ENCODE measurements at regions of chr2 and their contacts with region 1.

Region 1: GRCh38 chr2:85266146-85267041 is 61.4 kb downstream of the TGOLN2 start:
- H3K4me3 ChIP-seq: no peak overlapping the region
- H3K27ac ChIP-seq: no peak overlapping the region
- H3K4me1 ChIP-seq: no peaks in the 10 kb centered on the region
- CTCF ChIP-seq: no peak

Region 2: DNA sequence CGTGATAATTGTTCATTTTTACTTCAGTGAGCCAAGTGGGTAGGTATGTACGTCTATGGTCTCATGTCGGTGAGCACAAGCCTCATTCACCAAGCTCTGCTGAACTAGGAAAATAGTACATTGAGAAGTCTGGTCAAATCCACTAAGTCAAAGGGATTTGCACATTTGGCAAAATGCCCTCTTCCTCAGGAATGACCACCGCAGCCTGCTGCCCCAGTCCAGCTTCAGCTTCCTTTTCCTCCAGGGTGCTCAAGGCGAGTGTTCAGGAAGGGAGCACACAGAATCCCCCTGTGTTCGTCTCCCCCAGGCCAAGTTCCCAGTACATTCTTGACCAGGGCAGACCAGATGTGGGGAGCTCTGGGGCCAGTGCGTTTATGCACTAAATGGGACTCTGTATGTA is 110.2 kb before region 1 on chr2:
- CTCF ChIA-PET with region 1: no interaction called
- POLR2A ChIA-PET with region 1: no interaction called
- H3K4me3 ChIP-seq: no peak overlapping the region
- H3K27ac ChIP-seq: no peak overlapping the region
- H3K4me1 ChIP-seq: peaks cover 18% of the 10 kb centered on the region
- CTCF ChIP-seq: no peak

Region 3: DNA sequence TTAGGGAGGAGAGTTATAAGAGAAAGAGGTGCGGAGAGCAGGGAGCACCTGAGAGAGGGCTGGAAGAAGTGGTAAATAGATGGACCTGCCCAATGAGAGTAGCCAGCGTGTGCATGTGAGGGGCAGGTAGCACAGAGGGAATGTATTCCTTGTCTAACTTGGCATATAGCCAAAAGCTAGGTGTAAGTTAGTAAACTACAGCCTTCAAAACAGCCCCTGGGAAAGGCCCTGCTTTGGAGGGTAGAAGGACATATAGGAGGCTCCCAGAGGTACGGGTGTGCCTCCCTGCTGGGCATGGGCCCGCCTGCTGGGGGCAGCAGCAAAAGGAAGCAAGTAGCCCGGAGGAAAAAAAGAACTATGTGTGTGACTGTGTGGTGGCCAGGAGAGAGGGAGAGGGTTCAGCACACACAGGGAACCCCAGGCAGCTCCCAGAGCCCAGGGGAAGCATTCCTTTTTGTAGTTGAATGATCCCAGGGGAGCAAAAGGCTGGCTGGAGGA is 85.2 kb before region 1 on chr2:
- CTCF ChIA-PET with region 1: interaction called, 14 read pairs
- POLR2A ChIA-PET with region 1: no interaction called
- H3K4me3 ChIP-seq: no peak overlapping the region
- H3K27ac ChIP-seq: no peak overlapping the region
- H3K4me1 ChIP-seq: peaks cover 4% of the 10 kb centered on the region; the same call in 1 of the 2 replicates
- CTCF ChIP-seq: no peak

Region 4: GRCh38 chr2:85243101-85244072 is 23.0 kb before region 1 on chr2:
- CTCF ChIA-PET with region 1: interaction called, 11 read pairs
- POLR2A ChIA-PET with region 1: no interaction called
- H3K4me3 ChIP-seq: no peak overlapping the region
- H3K27ac ChIP-seq: no peak overlapping the region
- H3K4me1 ChIP-seq: no peaks in the 10 kb centered on the region
- CTCF ChIP-seq: peak; percentile 37; the same call in 1 of the 2 replicates

Region 5: DNA sequence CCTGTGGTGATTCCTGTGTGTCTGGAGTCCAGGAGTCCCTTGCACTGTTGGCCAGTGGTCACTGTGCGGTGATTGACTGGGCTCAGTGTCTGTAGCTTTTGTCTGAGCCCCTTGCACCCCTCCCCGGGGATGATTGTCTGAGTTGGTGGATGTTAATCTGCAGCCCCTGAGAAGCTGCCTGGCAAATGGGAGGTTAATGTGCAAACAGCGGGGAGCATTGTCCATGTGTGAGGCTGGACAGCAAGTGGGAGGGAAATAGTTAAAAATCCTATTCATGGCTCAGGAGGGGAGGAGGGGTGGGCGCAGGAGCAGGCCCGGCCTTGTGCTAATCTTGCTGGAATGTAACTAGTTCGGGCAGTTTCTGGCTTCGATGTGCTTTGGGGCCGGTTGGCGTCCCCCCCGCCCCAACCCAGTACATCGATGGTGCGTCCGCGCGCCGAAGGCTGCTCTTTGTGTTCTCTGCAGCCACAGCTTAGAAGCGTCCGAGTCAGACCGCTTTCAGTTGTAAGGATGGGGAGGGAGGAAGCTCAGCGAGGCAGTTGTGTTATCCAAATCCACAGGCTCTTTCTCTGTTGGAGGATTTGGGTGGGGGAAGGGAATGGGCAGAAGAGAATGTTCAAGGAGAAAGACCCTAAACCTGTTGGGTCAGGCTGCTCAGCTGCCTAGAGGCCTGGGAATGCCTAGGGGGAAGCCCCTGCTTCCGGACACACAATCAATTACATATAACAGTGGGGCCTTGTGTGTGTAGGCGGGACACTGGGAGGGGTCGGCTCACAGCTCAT is 10.4 kb before region 1 on chr2:
- CTCF ChIA-PET with region 1: interaction called, 44 read pairs
- POLR2A ChIA-PET with region 1: no interaction called
- H3K4me3 ChIP-seq: no peak overlapping the region
- H3K27ac ChIP-seq: no peak overlapping the region
- H3K4me1 ChIP-seq: no peaks in the 10 kb centered on the region
- CTCF ChIP-seq: no peak

Region 6: GRCh38 chr2:85282914-85283313 is 16.5 kb after region 1 on chr2:
- CTCF ChIA-PET with region 1: interaction called, 41 read pairs
- POLR2A ChIA-PET with region 1: no interaction called
- H3K4me3 ChIP-seq: no peak overlapping the region
- H3K27ac ChIP-seq: no peak overlapping the region
- H3K4me1 ChIP-seq: no peaks in the 10 kb centered on the region
- CTCF ChIP-seq: no peak

Measured in HEK293 (cell line).